ENCODE measurements at regions of chr5 and their contacts with region 1.

Region 1: GRCh38 chr5:35171078-35171477 is 59.2 kb downstream of the PRLR start:
- DNase-seq: no peak
- H3K4me3 ChIP-seq: no peak overlapping the region
- H3K27ac ChIP-seq: no peak overlapping the region
- H3K4me1 ChIP-seq: no peaks in the 10 kb centered on the region
- H3K27me3 ChIP-seq: no peaks in the 10 kb centered on the region
- CTCF ChIP-seq: no peak

Region 2: GRCh38 chr5:35239911-35240609 is 69.0 kb after region 1 on chr5:
- CTCF ChIA-PET with region 1: no interaction called
- dilution Hi-C with region 1: loop called (anchors 5 kb)
- in situ Hi-C with region 1: no loop called
- intact Hi-C with region 1: no loop called
- DNase-seq: no peak
- H3K4me3 ChIP-seq: no peak overlapping the region
- H3K27ac ChIP-seq: no peak overlapping the region
- H3K4me1 ChIP-seq: no peaks in the 10 kb centered on the region
- H3K27me3 ChIP-seq: no peaks in the 10 kb centered on the region
- CTCF ChIP-seq: no peak